HCT116 (cell line): ENCODE measurements at regions of chr10 and their contacts with region 1.

Region 1: DNA sequence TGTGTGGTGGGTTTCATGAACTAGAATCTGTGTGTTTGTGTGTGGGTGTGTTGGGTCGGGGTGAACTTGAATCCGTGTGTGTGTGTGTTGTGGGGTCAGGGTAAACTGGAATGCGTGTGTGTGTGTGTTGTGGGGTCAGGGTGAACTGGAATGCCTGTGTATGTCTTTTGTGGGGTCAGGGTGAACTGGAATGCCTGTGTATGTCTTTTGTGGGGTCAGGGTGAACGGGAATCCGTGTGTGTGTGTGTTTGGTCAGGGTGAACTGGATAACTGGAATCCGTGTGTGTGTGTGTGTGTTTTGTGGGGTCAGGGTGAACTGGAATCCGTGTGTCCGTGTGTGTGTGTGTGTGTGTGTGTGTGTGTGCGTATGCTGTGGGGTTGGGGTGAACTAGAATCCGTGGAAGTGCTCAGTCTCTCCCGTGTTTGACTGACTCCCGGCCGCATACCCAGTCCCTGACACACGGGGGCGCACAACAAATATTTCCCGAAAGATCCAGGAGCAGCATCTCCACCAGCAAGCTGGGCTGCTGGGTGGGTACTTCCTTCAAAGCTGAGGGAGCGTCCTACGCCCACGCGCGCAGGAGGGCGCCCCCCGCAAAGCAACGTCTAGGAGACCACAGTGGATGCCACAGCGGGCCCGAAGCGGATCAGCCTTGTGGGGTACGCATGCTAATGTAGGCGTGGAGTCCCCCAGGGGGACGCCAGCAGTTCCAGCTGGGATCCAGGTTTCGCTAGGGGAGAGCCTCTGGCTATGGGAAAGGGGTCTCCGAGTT is 836 bp upstream of the CASP7 start:
- DNase-seq: peak; percentile 80
- ATAC-seq: peak; percentile 77
- H3K4me3 ChIP-seq: peak overlapping the region; percentile 94 to 97
- H3K27ac ChIP-seq: peak overlapping the region; percentile 90
- H3K4me1 ChIP-seq: peaks cover 7 to 21% of the 10 kb centered on the region in 2 experiments
- H3K27me3 ChIP-seq: no peaks in the 10 kb centered on the region
- CTCF ChIP-seq: peak; percentile 68 to 92 (median 81); a peak in 5 of 6 replicates
- POLR2A ChIP-seq: no peak
- RAD21 ChIP-seq: peak; percentile 45

Region 2: DNA sequence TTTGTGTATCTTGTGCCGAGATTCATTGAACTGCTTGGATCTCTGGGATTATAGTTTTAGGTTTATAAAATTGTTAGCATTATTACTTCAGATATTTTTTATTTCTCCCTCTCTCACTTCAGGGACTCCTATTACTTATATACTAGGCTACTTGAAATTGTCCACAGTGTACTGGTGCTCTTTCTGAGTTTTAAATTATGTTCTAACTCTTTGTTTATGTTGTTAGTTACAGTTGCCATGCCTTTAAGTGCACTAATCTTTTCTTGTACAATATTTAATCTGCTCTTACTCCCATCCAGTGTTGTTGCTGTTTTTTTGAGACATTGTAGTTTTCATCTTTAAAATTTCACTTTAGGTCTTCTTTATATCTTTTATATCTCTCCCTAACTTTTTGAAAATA is 85.7 kb after region 1 on chr10:
- CTCF ChIA-PET with region 1: no interaction called
- POLR2A ChIA-PET with region 1: no interaction called
- RAD21 ChIA-PET with region 1: no interaction called
- intact Hi-C with region 1: no loop called
- DNase-seq: no peak
- ATAC-seq: no peak
- H3K4me3 ChIP-seq: no peak overlapping the region
- H3K27ac ChIP-seq: no peak overlapping the region
- H3K4me1 ChIP-seq: no peaks in the 10 kb centered on the region
- H3K27me3 ChIP-seq: peaks cover 20% of the 10 kb centered on the region; the same call in 1 of the 2 replicates
- CTCF ChIP-seq: no peak
- POLR2A ChIP-seq: no peak
- RAD21 ChIP-seq: no peak

Region 3: GRCh38 chr10:114103284-114103683 is 424.4 kb after region 1 on chr10:
- CTCF ChIA-PET with region 1: no interaction called
- POLR2A ChIA-PET with region 1: no interaction called
- RAD21 ChIA-PET with region 1: interaction called in 1 of 2 experiments, 3 read pairs
- intact Hi-C with region 1: loop called (anchors 1 kb)
- DNase-seq: peak; percentile 58
- ATAC-seq: peak; percentile 93
- H3K4me3 ChIP-seq: no peak overlapping the region
- H3K27ac ChIP-seq: no peak overlapping the region
- H3K4me1 ChIP-seq: 0 out of 4 replicates have a peak, but pooled peaks cover 0 to 4% of the 10 kb centered on the region in 2 experiments
- H3K27me3 ChIP-seq: no peaks in the 10 kb centered on the region
- CTCF ChIP-seq: peak; percentile 56 to 91 (median 63)
- POLR2A ChIP-seq: no peak
- RAD21 ChIP-seq: peak; percentile 98